ENCODE measurements at regions of chr10 and their contacts with region 1.

Region 1: GRCh38 chr10:8026346-8027240 is 27.9 kb upstream of the GATA3 start:
- DNase-seq: no peak
- H3K4me3 ChIP-seq: peak overlapping the region; percentile 17; the same call in 1 of the 2 replicates
- H3K27me3 ChIP-seq: peaks cover 9% of the 10 kb centered on the region
- CTCF ChIP-seq: no peak

Region 2: GRCh38 chr10:8013006-8013405 is 13.6 kb before region 1 on chr10:
- CTCF ChIA-PET with region 1: no interaction called
- POLR2A ChIA-PET with region 1: no interaction called
- DNase-seq: no peak
- H3K4me3 ChIP-seq: no peak overlapping the region
- H3K27me3 ChIP-seq: no peaks in the 10 kb centered on the region
- CTCF ChIP-seq: no peak

Region 3: DNA sequence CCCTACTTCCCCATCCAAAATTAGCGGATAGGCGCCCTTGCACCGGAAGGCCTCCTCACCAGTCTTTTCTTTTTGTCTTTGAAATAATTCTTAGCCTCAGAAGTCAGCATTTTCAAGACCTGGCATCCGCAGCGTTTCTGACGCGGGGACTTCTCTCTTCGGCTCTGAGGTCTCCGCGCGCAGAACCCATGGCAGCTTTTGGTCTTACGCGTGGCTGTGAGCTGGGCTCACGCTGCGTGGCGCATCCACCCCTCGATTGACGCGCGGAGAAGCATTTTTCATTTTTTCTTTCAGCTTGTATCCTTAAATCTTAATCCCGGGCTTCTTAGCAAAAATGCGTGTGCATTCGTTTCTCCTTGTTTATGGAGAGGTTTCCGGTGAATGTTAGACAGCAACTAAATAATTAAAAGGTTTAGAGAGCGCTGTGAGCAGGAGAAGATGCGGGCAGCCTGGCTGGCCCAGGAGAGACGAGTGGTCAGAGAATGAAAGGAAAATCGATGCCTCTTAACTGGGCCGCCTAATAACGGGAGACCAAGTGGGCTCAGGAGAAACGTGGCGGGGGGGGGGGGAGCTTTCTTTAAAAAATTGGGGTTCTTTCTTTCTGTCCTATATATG is 25.9 kb after region 1 on chr10:
- CTCF ChIA-PET with region 1: interaction called, 4 read pairs
- POLR2A ChIA-PET with region 1: interaction called, 16 read pairs
- DNase-seq: no peak
- H3K4me3 ChIP-seq: no peak overlapping the region
- H3K27me3 ChIP-seq: peaks cover 54% of the 10 kb centered on the region
- CTCF ChIP-seq: no peak